Sigmoid colon (tissue), 7 donors: ENCODE measurements at regions of chr10 and their contacts with region 1.

Region 1: DNA sequence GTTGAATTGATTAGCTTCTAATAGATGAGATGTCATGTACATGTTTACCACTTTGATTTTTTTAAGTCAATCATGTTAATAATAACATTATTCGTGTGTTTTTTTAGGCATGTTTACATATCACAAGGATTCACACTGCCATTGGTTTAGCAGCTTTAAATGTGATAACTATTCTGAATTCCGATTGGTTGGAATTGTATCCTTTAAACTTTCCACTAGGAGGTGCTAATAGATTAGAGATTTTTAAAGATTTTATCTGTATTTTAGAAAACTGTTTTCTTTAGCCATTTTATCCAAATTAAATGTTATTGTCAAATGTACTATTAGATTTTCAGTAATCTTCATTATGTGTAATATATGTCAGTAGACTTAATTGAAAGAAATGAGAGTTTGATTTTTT is 83.2 kb downstream of the HECTD2 start:
- DNase-seq: no peak
- H3K4me3 ChIP-seq: no peak overlapping the region
- H3K27ac ChIP-seq: no peak overlapping the region
- H3K4me1 ChIP-seq: no peaks in the 10 kb centered on the region
- H3K27me3 ChIP-seq: no peaks in the 10 kb centered on the region
- CTCF ChIP-seq: peak; percentile 27 to 55 (median 42)
- EP300 ChIP-seq: no peak
- POLR2A ChIP-seq: no peak

Region 2: DNA sequence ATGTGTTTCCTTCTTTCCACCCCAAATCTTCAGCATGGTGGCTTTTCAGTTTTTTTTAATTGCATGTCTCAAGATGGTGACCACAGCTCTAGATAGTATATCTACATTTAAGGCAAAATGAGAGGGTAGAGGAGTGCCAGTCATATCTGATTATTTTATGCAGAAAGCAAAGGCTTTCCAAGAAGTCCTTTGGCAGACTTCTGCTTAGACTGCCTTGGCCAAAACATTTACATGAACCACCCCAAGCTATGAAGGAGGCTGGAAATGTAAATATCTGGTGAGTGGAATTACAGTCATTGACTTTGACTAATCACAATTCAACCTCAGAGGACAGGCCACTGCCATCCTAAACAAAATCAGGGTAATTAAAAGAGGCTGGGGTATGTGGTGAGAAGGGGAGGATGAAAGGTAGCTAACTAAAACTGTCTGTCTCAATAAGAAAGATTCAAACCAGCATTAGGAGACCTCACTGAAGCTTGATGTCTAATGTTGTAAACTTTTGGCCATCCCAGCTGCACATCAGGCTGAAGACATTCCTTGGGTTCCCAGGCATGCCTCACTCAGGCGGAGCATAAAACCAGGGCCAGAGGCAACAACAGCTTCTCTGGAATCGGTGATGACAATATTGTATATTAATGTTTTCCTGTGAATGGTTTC is 86.1 kb after region 1 on chr10:
- intact Hi-C with region 1: loop called (anchors 10 kb)
- DNase-seq: no peak
- H3K4me3 ChIP-seq: no peak overlapping the region
- H3K27ac ChIP-seq: peak overlapping the region; percentile 35 to 73 (median 54)
- H3K4me1 ChIP-seq: peaks cover 0 to 45% (median 42%) of the 10 kb centered on the region in 4 donors
- H3K27me3 ChIP-seq: no peaks in the 10 kb centered on the region
- CTCF ChIP-seq: no peak
- EP300 ChIP-seq: no peak
- POLR2A ChIP-seq: no peak

Region 3: GRCh38 chr10:91672021-91672608 is 178.8 kb after region 1 on chr10:
- intact Hi-C with region 1: no loop called
- DNase-seq: no peak
- H3K4me3 ChIP-seq: no peak overlapping the region
- H3K27ac ChIP-seq: no peak overlapping the region
- H3K4me1 ChIP-seq: no peaks in the 10 kb centered on the region
- H3K27me3 ChIP-seq: no peaks in the 10 kb centered on the region
- CTCF ChIP-seq: no peak
- EP300 ChIP-seq: no peak
- POLR2A ChIP-seq: no peak

Region 4: DNA sequence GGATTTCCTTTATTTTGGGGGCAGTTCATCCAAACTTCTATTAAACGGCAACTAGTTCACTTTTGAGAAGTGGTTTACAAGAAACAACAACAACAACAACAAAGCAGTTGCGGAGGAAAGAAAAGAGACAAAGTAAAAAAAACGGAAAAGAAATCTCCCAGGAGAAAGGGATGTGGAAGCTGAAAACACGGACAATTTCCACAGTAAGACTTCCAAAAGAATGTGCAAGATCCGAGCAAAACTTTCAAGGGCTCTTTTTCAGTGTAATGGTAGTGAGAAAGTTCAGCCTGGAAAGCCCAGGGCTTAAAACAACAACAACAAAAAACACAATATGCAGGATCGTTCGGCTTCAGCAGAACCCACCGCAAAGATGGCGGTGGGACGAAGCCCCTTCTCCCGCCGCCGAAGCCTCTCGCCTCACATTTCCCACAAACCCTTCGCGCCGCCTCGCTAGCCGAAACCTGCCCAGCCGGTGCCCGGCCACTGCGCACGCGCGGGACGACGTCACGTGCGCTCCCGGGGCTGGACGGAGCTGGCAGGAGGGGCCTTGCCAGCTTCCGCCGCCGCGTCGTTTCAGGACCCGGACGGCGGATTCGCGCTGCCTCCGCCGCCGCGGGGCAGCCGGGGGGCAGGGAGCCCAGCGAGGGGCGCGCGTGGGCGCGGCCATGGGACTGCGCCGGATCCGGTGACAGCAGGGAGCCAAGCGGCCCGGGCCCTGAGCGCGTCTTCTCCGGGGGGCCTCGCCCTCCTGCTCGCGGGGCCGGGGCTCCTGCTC is 304.7 kb after region 1 on chr10 and contains the start of gene TNKS2:
- intact Hi-C with region 1: loop called (anchors 5 kb)
- DNase-seq: peak; percentile 96
- H3K4me3 ChIP-seq: peak within 1 kb of the TSS; percentile 74 to 97 (median 92)
- H3K27ac ChIP-seq: peak within 1 kb of the TSS; percentile 96 to 99 (median 98)
- H3K4me1 ChIP-seq: peaks cover 0 to 48% (median 41%) of the 10 kb centered on the region in 4 donors
- H3K27me3 ChIP-seq: no peaks in the 10 kb centered on the region
- CTCF ChIP-seq: no peak
- EP300 ChIP-seq: peak in 1 of 4 donors; percentile 26
- POLR2A ChIP-seq: peak; percentile 83 to 85
- total RNA-seq, gene TNKS2: 37.4 to 46.7 (median 40.5) TPM

Region 5: GRCh38 chr10:91923371-91924211 is 430.3 kb after region 1 on chr10 and contains the start of gene BTAF1:
- intact Hi-C with region 1: loop called (anchors 10 kb)
- DNase-seq: peak; percentile 95
- H3K4me3 ChIP-seq: peak within 1 kb of the TSS; percentile 76 to 90 (median 82)
- H3K27ac ChIP-seq: peak within 1 kb of the TSS; percentile 97
- H3K4me1 ChIP-seq: peaks cover 0 to 38% (median 22%) of the 10 kb centered on the region in 4 donors
- H3K27me3 ChIP-seq: no peaks in the 10 kb centered on the region
- CTCF ChIP-seq: no peak
- EP300 ChIP-seq: peak in 2 of 4 donors; percentile 19 to 48
- POLR2A ChIP-seq: peak; percentile 88
- total RNA-seq, gene BTAF1: 34.6 to 45.5 (median 35.3) TPM